PC-3 (cell line): ENCODE measurements at regions of chr11 and their contacts with region 1.

Region 1: GRCh38 chr11:9280655-9281301 is 15.6 kb upstream of the DENND5A start:
- DNase-seq: peak; percentile 77
- ATAC-seq: peak; percentile 61
- H3K4me3 ChIP-seq: no peak overlapping the region
- H3K27ac ChIP-seq: no peak overlapping the region
- H3K4me1 ChIP-seq: peaks cover 8% of the 10 kb centered on the region; the same call in 1 of the 2 replicates
- H3K27me3 ChIP-seq: no peaks in the 10 kb centered on the region
- CTCF ChIP-seq: no peak

Region 2: DNA sequence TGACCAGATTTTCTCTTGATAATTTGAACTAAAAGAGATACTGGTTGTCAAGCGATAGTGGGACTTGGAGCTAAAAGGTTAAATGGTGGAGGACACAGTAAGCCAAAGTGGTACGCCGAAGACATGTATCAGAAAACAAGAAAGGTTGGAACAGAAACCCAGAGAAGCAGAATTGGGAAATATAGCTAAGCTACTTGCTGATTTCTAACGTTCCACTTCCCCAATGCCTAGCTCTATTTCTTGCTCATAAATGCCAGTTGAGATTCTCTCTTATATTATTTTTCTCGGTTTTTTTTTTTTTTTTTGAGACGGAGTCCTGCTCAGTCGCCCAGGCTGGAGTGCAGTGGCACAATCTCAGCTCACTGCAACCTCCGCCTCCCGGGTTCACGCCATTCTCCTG is 20.9 kb after region 1 on chr11:
- CTCF ChIA-PET with region 1: no interaction called
- POLR2A ChIA-PET with region 1: no interaction called
- intact Hi-C with region 1: no loop called
- DNase-seq: no peak
- ATAC-seq: no peak
- H3K4me3 ChIP-seq: no peak overlapping the region
- H3K27ac ChIP-seq: no peak overlapping the region
- H3K4me1 ChIP-seq: no peaks in the 10 kb centered on the region
- H3K27me3 ChIP-seq: no peaks in the 10 kb centered on the region
- CTCF ChIP-seq: no peak

Region 3: GRCh38 chr11:9691865-9692264 is 411.1 kb after region 1 on chr11:
- CTCF ChIA-PET with region 1: interaction called, 10 read pairs
- POLR2A ChIA-PET with region 1: no interaction called
- intact Hi-C with region 1: no loop called
- DNase-seq: peak; percentile 68
- ATAC-seq: peak; percentile 83
- H3K4me3 ChIP-seq: no peak overlapping the region
- H3K27ac ChIP-seq: 0 out of 2 replicates have a peak overlapping the region, but pooled peaks have one; percentile 5
- H3K4me1 ChIP-seq: peaks cover 30% of the 10 kb centered on the region
- H3K27me3 ChIP-seq: no peaks in the 10 kb centered on the region
- CTCF ChIP-seq: no peak